ENCODE measurements at regions of chrX and their contacts with region 1.

Region 1: GRCh38 chrX:45577361-45577760 is 376.7 kb upstream of the DIPK2B start:
- DNase-seq: no peak
- H3K4me3 ChIP-seq: no peak overlapping the region
- CTCF ChIP-seq: no peak
- POLR2A ChIP-seq: no peak

Region 2: DNA sequence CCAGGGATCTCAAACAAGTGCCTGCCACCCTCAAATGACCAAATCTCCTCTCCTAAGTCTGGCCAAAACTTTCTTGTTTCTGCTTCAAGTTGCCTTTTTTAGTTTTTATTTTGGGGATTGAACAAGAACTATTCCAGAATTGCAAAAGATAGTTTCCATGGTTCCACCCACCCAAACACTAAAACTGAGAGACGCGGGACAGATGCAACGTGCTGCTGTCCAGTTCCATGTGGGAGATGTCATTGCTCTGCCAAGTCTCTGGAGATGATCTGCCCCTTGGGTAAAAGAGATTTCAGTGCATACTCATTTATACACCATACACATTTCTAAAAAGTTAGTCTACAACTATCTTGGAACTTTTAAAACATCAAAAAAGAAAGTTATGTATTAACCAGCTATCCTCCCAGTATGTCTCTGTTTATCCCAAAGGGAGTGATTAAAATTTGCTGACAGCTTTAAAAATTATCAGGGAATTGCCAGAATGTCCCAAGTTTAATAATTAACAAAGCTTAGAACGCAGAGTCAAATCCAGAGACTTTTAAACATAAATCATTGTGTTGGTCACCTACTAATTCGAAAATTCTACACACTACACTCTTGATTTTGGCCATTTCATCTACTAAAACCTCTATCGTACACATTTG is 1698.4 kb before region 1 on chrX:
- intact Hi-C with region 1: loop called (anchors 5 kb)
- DNase-seq: no peak
- H3K4me3 ChIP-seq: no peak overlapping the region
- CTCF ChIP-seq: no peak
- POLR2A ChIP-seq: no peak